ENCODE measurements at regions of chr3 and their contacts with region 1.

Region 1: DNA sequence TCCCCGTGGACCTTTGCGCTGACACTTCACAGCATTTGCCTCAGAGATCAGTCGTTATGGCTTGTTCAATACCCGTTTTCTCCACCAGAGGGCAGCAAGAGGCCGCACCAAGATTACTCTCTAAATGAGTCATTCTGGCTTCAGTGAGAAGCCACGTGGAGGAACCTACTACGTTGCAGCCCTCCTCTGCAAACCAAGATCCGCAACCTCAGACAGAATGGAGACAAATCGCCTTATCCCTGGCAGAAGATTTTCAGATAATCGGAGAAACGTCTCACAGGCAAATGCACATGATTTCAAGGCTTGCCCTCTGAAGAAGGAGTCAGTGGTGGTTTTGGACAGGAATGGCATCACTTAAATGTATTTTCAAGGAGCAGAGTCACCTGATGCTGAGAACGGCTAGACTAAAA is 60.5 kb downstream of the GTPBP8 start:
- DNase-seq: peak; percentile 87
- H3K4me3 ChIP-seq: no peak overlapping the region
- H3K27ac ChIP-seq: peak overlapping the region; percentile 48 to 62
- H3K4me1 ChIP-seq: no peaks in the 10 kb centered on the region
- H3K27me3 ChIP-seq: no peaks in the 10 kb centered on the region
- CTCF ChIP-seq: peak; percentile 88 to 98 (median 96)
- POLR2A ChIP-seq: no peak

Region 2: GRCh38 chr3:113084777-113085176 is 33.5 kb after region 1 on chr3:
- intact Hi-C with region 1: loop called (anchors 5 kb)
- DNase-seq: no peak
- H3K4me3 ChIP-seq: no peak overlapping the region
- H3K27ac ChIP-seq: no peak overlapping the region
- H3K4me1 ChIP-seq: no peaks in the 10 kb centered on the region
- H3K27me3 ChIP-seq: no peaks in the 10 kb centered on the region
- CTCF ChIP-seq: no peak
- POLR2A ChIP-seq: no peak

Region 3: DNA sequence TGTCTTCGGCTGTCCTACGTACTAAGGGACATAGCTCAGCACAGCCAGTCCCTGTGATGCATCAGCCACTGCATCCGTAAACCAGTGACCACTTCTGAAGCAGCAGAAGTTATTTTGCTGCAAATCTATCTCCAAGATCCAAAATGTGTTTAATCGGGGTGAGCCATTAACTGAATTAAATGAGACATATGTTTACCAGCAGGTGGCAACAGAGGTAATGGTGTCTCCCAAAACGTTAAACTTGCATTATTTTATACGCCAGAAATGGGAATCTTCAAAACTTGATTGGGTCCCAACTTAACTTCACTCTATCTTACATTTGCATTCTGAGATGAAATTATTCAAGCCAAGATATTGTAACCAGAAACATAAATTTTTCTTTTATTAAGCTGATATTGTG is 84.8 kb after region 1 on chr3:
- intact Hi-C with region 1: loop called (anchors 2 kb)
- DNase-seq: peak; percentile 7
- H3K4me3 ChIP-seq: no peak overlapping the region
- H3K27ac ChIP-seq: no peak overlapping the region
- H3K4me1 ChIP-seq: no peaks in the 10 kb centered on the region
- H3K27me3 ChIP-seq: no peaks in the 10 kb centered on the region
- CTCF ChIP-seq: peak; percentile 54 to 77 (median 65)
- POLR2A ChIP-seq: no peak

Region 4: DNA sequence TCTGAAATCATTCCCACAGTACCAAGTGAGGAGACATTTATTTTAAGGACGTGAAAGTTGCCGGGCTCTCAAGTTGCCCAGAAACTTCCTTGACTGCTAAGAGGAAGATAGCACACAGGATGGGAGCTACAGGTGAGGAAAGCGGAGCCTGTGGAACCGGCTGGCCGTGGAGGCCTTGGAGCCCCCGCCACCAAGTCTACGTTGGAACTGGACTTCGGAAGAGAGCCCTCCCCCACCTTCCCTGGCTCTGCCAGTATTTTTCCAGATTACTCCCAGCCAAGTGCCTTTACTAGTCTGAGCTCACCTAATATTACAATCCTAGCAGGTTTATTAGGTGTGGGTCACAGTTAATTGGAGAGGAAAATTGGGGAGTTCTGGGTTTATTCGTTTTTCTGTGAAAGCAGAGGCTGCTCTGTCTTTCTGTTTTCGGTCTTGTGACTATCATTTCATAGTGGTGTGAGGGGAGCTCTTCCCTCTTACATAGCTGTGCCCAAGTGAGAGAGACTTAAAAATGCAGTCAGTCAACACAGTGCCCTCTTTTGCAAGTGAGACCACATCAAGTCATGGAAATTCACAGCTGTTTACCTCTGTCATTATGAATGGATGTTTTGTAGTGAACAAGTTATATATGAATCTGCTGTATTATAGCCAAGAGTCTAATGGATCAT is 166.8 kb after region 1 on chr3:
- intact Hi-C with region 1: loop called (anchors 2 kb)
- DNase-seq: no peak
- H3K4me3 ChIP-seq: no peak overlapping the region
- H3K27ac ChIP-seq: peak overlapping the region in 1 of 2 donors; percentile 7
- H3K4me1 ChIP-seq: no peaks in the 10 kb centered on the region
- H3K27me3 ChIP-seq: no peaks in the 10 kb centered on the region
- CTCF ChIP-seq: no peak
- POLR2A ChIP-seq: no peak

Region 5: GRCh38 chr3:113287803-113288648 is 236.7 kb after region 1 on chr3:
- intact Hi-C with region 1: loop called (anchors 2 kb)
- DNase-seq: peak; percentile 60
- H3K4me3 ChIP-seq: no peak overlapping the region
- H3K27ac ChIP-seq: peak overlapping the region; percentile 50 to 59
- H3K4me1 ChIP-seq: no peaks in the 10 kb centered on the region
- H3K27me3 ChIP-seq: no peaks in the 10 kb centered on the region
- CTCF ChIP-seq: peak; percentile 97 to 99 (median 98)
- POLR2A ChIP-seq: no peak

Region 6: GRCh38 chr3:113514265-113514769 is 463.0 kb after region 1 on chr3:
- intact Hi-C with region 1: loop called (anchors 10 kb)
- DNase-seq: no peak
- H3K4me3 ChIP-seq: peak overlapping the region; percentile 64 to 66
- H3K27ac ChIP-seq: peak overlapping the region; percentile 82 to 85
- H3K4me1 ChIP-seq: no peaks in the 10 kb centered on the region
- H3K27me3 ChIP-seq: no peaks in the 10 kb centered on the region
- CTCF ChIP-seq: no peak
- POLR2A ChIP-seq: no peak

Region 7: GRCh38 chr3:113575206-113575605 is 523.9 kb after region 1 on chr3:
- intact Hi-C with region 1: loop called (anchors 10 kb)
- DNase-seq: no peak
- H3K4me3 ChIP-seq: no peak overlapping the region
- H3K27ac ChIP-seq: no peak overlapping the region
- H3K4me1 ChIP-seq: no peaks in the 10 kb centered on the region
- H3K27me3 ChIP-seq: no peaks in the 10 kb centered on the region
- CTCF ChIP-seq: no peak
- POLR2A ChIP-seq: no peak

Measured in prostate gland (tissue), 2 donors.